BJ (cell line): ENCODE measurements at regions of chr4 and their contacts with region 1.

Region 1: DNA sequence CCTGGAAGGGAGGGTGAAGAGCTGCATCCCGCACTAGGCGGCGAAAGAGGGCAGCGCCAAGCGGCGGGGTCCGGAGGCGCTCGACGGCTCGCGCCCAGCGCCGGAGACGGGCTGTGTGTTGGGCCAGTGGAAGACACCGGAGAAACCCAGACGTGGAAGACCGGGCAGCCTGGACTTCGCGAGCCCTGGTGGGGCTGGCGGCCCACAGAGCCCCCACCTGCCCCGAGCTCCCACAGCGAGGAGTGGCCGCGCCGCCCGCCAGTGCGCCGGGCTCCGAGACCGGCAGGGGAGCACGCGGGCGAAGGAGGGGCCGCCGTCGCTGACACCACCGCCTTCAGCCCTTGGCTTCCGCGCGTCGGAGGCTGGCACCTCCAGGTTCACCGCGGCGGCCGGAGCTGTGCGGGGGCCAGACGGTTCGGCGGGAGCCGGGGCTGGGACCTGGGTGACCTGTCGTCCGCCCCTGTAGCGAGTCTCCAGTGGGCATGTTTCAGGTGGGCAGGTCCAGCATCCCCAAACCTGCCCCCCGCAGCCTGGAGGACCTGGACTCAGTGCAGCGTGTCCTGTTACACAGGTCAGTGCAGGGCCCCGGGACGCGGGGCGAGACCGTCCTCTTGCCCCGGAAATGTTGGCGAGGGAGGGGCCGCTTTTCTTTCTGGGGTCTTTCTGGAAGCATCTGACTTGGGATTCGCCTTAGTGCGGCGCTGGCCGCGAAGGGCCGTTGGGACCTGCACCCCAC is 9.7 kb upstream of the INTU start:
- DNase-seq: no peak
- H3K4me3 ChIP-seq: peak overlapping the region; percentile 68
- H3K27me3 ChIP-seq: peaks cover 4% of the 10 kb centered on the region
- CTCF ChIP-seq: peak; percentile 44

Region 2: DNA sequence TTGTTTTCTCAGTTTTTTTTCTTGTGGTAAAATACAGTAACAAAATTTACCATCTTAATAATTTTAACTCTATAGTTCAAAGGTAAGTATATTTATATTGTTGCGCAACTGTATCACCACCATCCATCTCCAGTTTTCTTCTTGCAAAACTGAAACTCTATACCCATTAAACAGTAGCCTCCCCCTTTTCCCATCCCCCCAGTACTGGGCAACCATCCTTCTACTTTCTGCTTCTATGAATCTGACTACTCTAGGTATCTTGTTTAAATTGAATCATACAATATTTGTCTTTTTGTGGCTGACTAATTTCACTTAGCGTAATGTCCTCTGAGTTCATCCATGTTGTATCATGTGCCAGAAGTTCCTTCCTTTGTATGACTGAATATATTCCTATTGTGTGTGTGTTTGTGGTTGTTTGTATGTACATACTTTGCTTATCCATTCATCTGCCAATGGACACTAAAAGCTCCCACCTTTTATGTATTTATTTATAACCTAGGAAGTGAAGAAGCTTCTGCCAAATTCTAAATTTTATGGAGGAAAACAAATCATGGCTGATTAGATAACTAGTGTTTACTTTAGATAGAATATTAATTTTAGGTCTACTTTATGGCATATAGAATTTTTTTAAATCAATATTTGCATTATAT is 352.2 kb after region 1 on chr4:
- CTCF ChIA-PET with region 1: no interaction called
- POLR2A ChIA-PET with region 1: interaction called, 12 read pairs
- DNase-seq: no peak
- H3K4me3 ChIP-seq: no peak overlapping the region
- H3K27me3 ChIP-seq: no peaks in the 10 kb centered on the region
- CTCF ChIP-seq: no peak

Region 3: GRCh38 chr4:128675083-128675482 is 1052.0 kb after region 1 on chr4:
- CTCF ChIA-PET with region 1: no interaction called
- POLR2A ChIA-PET with region 1: no interaction called
- DNase-seq: no peak
- H3K4me3 ChIP-seq: no peak overlapping the region
- H3K27me3 ChIP-seq: no peaks in the 10 kb centered on the region; the same call in 1 of the 2 replicates
- CTCF ChIP-seq: no peak